Right ventricle myocardium superior (tissue), 1 donor: ENCODE measurements at regions of chr10 and their contacts with region 1.

Region 1: GRCh38 chr10:7121154-7121810 is 289.6 kb downstream of the SFMBT2 start:
- DNase-seq: peak; percentile 63
- ATAC-seq: peak; percentile 87

Region 2: GRCh38 chr10:6871126-6871525 is 250.2 kb before region 1 on chr10:
- intact Hi-C with region 1: no loop called
- DNase-seq: no peak
- ATAC-seq: no peak

Region 3: DNA sequence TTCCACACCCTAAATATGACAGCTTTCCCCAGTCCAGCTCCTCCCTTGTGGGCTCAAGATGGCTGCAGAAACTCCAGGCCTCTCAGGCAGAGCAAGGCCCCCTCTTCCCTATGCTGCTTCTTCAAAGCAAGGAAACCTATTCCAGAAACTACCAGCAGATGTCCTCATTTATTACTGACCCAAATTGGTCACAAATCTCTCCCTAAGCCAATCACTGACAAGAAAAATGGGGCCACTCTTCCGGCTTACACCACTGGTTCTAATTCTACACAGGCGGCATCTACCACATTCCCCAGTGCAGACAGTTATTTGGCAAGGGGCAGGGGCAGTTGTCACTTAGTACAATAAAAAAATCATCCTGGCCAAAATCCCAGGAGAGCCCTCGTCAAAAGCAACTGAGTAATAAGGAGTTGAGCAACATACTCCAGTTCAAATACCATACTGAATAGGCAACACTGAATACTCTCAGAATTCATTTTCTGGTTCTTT is 139.2 kb after region 1 on chr10:
- intact Hi-C with region 1: loop called (anchors 10 kb)
- DNase-seq: peak; percentile 57
- ATAC-seq: peak; percentile 96